PC-3 (cell line): ENCODE measurements at regions of chr9 and their contacts with region 1.

Region 1: DNA sequence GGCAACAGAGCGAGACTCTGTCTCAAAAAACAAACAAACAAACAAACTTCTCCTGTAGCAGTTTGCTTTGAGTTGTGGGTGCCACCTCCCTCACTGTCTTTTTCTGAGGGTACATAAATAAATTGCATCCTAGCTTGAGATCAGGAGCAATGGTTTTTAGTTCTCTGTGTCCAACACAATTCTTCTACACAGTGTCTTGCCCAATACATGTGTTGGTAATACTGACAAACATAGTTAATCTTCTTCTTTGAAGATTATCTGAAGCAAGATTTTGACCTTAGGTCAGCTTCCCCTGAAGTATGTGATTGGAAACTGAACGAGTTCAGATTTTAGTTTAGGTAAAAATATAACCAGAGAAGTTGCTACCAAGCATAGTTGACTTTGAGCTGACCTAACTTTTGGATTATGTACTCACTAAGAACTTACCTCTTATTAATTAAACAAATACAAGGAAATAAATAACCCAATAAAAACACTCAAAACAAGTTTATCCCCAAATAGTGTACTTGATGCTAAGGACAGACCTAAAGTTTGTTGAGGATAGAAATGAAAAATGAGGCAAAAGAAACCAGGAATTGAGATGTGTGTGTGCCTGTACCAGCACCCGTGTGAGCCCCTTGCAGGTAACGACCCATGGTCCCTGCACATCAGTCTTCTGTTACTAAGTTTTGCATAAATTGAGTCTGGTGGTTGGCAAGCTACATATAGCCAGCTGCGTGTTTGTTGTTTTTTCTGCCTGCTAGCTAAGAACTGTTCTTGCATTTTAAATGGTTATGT is 16.2 kb downstream of the TJP2 start:
- DNase-seq: no peak
- ATAC-seq: no peak
- H3K4me3 ChIP-seq: no peak overlapping the region
- H3K27ac ChIP-seq: no peak overlapping the region
- H3K4me1 ChIP-seq: peaks cover 22% of the 10 kb centered on the region
- H3K27me3 ChIP-seq: no peaks in the 10 kb centered on the region
- CTCF ChIP-seq: no peak

Region 2: DNA sequence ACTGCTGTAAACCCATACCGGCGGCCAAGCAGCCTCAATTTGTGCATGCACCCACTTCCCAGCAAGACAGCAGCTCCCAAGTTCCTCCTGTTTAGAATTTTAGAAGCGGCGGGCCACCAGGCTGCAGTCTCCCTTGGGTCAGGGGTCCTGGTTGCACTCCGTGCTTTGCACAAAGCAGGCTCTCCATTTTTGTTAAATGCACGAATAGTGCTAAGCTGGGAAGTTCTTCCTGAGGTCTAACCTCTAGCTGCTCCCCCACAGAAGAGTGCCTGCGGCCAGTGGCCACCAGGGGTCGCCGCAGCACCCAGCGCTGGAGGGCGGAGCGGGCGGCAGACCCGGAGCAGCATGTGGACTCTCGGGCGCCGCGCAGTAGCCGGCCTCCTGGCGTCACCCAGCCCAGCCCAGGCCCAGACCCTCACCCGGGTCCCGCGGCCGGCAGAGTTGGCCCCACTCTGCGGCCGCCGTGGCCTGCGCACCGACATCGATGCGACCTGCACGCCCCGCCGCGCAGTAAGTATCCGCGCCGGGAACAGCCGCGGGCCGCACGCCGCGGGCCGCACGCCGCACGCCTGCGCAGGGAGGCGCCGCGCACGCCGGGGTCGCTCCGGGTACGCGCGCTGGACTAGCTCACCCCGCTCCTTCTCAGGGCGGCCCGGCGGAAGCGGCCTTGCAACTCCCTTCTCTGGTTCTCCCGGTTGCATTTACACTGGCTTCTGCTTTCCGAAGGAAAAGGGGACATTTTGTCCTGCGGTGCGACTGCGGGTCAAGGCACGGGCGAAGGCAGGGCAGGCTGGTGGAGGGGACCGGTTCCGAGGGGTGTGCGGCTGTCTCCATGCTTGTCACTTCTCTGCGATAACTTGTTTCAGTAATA is 154.6 kb before region 1 on chr9 and contains the start of gene FXN:
- CTCF ChIA-PET with region 1: interaction called, 5 read pairs
- POLR2A ChIA-PET with region 1: interaction called, 3 read pairs
- intact Hi-C with region 1: loop called (anchors 1 kb)
- DNase-seq: peak; percentile 75
- ATAC-seq: peak; percentile 95
- H3K4me3 ChIP-seq: peak within 1 kb of the TSS; percentile 96
- H3K27ac ChIP-seq: peak within 1 kb of the TSS; percentile 22
- H3K4me1 ChIP-seq: peaks cover 6% of the 10 kb centered on the region; the same call in 1 of the 2 replicates
- H3K27me3 ChIP-seq: no peaks in the 10 kb centered on the region
- CTCF ChIP-seq: peak; percentile 87
- total RNA-seq, gene FXN: 10.0 and 11.0 TPM in 2 replicates

Region 3: DNA sequence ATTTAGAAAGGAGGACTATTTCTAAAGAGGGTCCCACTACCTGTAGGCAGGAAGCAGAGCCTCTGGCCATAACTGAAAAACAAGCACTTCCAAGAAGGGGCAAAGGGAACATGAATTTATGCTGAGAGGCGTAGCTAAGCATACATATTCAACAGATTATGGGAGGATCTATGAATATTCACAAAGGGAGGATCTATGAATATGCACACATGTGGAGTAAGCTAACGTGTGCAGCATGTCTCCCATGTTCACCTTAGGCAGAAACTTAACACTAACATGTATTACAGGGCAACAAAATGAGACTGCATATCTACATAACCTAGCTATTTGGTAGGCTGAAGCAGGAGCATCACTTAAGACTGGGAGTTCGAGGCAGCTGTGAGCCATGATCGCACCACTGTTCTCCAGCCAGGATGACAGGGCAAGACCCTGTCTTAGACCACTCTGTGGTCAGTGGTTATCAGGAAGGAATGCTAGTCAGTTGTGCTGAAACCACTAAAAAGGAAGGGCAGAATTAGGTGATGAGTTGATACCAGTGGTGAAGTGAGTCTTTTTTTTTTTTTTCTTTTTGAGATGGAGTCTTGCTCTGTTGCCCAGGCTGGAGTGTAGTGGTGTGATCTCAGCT is 134.0 kb before region 1 on chr9:
- CTCF ChIA-PET with region 1: interaction called, 13 read pairs
- POLR2A ChIA-PET with region 1: no interaction called
- intact Hi-C with region 1: loop called (anchors 1 kb)
- DNase-seq: no peak
- ATAC-seq: no peak
- H3K4me3 ChIP-seq: no peak overlapping the region
- H3K27ac ChIP-seq: no peak overlapping the region
- H3K4me1 ChIP-seq: no peaks in the 10 kb centered on the region
- H3K27me3 ChIP-seq: no peaks in the 10 kb centered on the region
- CTCF ChIP-seq: no peak

Region 4: DNA sequence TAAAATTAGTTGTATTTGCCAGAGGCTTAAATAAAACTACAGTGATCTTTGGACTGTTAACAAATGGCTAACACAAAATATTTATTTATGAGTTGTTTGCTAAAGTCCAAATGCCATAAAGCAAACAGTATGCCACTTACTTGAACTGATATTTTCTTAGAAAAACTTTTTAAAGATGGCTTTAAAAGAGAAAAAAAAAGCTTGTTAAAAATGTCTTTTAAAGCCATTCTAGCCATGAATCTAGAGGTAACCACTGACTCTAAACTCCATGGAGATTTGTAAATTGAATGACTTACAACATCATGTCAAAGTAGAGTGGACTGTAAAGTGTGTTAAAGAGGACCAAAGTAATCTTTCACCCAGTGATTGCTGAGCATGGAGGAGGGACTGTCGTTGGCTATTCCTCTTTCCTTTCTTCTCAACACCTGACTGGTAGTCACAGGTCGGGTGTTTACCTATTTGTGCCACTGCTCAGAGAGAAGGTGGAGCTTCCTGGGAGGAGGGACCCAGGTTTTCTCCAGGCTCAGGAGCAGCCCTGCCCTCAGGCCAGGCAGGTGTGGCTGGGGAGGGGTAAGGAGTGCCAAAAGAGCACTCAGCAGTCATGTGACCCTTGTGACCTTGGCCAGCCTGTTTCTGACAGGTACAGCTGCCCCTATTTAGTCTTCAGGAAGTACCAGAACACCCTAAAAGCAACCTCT is 85.3 kb before region 1 on chr9:
- CTCF ChIA-PET with region 1: no interaction called
- POLR2A ChIA-PET with region 1: no interaction called
- intact Hi-C with region 1: loop called (anchors 5 kb)
- DNase-seq: peak; percentile 73
- ATAC-seq: peak; percentile 79
- H3K4me3 ChIP-seq: no peak overlapping the region; the same call in 1 of the 2 replicates
- H3K27ac ChIP-seq: peak overlapping the region; percentile 48
- H3K4me1 ChIP-seq: peaks cover 29% of the 10 kb centered on the region
- H3K27me3 ChIP-seq: no peaks in the 10 kb centered on the region
- CTCF ChIP-seq: no peak

Region 5: DNA sequence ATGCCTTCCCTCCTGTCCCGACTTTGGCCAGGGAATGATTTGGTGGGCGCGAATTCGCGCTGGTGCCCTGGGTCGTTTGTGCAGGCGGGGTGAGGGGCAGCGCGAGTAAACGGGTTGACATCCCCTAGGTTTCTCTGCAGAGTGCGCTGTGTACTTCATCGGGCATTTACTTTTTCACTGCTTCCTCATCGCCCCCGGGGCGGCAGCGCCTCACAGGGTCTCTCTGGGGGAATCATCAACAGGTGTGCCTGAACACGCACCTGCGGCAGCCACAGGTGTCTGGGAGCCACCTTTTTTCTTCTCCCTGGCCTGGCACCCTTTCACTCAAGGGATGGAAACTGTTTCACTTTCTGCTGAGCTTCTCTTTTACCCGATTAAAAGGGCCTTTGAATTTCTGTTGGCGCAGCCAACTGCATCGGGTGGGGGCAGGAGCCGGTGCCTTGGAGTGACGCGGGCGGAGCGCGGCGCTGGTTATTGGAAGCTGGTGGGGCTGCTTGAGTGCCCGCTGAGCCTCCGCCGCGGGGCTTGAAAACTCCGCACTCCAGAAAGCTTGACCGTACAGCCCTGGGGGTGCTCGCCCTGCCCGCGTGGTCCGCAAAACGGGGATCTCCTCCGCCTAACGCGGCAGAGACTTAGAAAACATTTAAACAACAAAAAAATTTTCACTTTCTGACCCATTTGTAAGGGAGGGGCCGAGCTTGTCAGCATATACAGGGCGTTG is 68.3 kb before region 1 on chr9:
- CTCF ChIA-PET with region 1: interaction called, 12 read pairs
- POLR2A ChIA-PET with region 1: no interaction called
- intact Hi-C with region 1: loop called (anchors 5 kb)
- DNase-seq: peak; percentile 48
- ATAC-seq: peak; percentile 38
- H3K4me3 ChIP-seq: peak overlapping the region; percentile 79
- H3K27ac ChIP-seq: peak overlapping the region; percentile 99
- H3K4me1 ChIP-seq: peaks cover 14% of the 10 kb centered on the region
- H3K27me3 ChIP-seq: no peaks in the 10 kb centered on the region
- CTCF ChIP-seq: no peak

Region 6: GRCh38 chr9:69155341-69156030 is 34.8 kb before region 1 on chr9:
- CTCF ChIA-PET with region 1: interaction called, 8 read pairs
- POLR2A ChIA-PET with region 1: no interaction called
- intact Hi-C with region 1: loop called (anchors 1 kb)
- DNase-seq: peak; percentile 78
- ATAC-seq: peak; percentile 86
- H3K4me3 ChIP-seq: peak overlapping the region; percentile 7; the same call in 1 of the 2 replicates
- H3K27ac ChIP-seq: peak overlapping the region; percentile 36
- H3K4me1 ChIP-seq: peaks cover 16% of the 10 kb centered on the region
- H3K27me3 ChIP-seq: no peaks in the 10 kb centered on the region
- CTCF ChIP-seq: no peak

Region 7: DNA sequence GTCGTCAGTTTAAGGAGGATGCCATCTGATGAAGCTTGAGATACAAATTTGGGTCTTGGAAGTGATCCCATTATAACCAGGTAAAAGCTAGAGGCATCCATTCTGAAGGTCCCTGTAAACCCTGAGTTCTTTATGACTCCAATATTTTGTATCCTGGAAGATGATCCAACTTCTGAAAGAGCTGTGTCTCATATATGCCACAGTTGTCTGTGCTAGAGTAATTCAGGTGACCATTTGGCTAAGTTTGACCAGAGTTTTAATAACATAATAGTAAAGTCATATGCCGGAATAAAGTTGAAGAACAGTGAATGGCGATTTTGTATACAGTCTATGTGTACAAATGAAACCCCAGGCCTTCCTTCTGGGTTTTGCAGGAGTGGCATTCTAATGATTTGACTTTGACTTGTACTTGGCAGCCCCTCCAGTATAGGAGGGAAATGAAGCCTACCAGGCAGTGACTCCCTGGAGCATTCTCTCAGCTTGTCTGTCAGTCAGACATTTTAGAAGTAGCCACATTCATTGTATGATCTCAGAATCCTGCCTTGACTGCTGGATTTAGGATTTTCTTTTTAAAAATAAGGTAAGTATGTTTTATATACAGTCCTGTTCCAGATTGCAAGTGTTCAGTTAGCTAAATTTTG is 174.4 kb after region 1 on chr9:
- CTCF ChIA-PET with region 1: no interaction called
- POLR2A ChIA-PET with region 1: no interaction called
- intact Hi-C with region 1: no loop called
- DNase-seq: no peak
- ATAC-seq: no peak
- H3K4me3 ChIP-seq: no peak overlapping the region
- H3K27ac ChIP-seq: no peak overlapping the region
- H3K4me1 ChIP-seq: no peaks in the 10 kb centered on the region
- H3K27me3 ChIP-seq: no peaks in the 10 kb centered on the region
- CTCF ChIP-seq: no peak